PC-3 (cell line): ENCODE measurements at regions of chr17 and their contacts with region 1.

Region 1: GRCh38 chr17:40317880-40318829 is 9.2 kb downstream of the RARA start:
- DNase-seq: peak; percentile 91
- ATAC-seq: peak; percentile 69
- H3K4me3 ChIP-seq: peak overlapping the region; percentile 99
- H3K27ac ChIP-seq: peak overlapping the region; percentile 83
- H3K4me1 ChIP-seq: peaks cover 74% of the 10 kb centered on the region
- H3K27me3 ChIP-seq: no peaks in the 10 kb centered on the region
- CTCF ChIP-seq: no peak

Region 2: DNA sequence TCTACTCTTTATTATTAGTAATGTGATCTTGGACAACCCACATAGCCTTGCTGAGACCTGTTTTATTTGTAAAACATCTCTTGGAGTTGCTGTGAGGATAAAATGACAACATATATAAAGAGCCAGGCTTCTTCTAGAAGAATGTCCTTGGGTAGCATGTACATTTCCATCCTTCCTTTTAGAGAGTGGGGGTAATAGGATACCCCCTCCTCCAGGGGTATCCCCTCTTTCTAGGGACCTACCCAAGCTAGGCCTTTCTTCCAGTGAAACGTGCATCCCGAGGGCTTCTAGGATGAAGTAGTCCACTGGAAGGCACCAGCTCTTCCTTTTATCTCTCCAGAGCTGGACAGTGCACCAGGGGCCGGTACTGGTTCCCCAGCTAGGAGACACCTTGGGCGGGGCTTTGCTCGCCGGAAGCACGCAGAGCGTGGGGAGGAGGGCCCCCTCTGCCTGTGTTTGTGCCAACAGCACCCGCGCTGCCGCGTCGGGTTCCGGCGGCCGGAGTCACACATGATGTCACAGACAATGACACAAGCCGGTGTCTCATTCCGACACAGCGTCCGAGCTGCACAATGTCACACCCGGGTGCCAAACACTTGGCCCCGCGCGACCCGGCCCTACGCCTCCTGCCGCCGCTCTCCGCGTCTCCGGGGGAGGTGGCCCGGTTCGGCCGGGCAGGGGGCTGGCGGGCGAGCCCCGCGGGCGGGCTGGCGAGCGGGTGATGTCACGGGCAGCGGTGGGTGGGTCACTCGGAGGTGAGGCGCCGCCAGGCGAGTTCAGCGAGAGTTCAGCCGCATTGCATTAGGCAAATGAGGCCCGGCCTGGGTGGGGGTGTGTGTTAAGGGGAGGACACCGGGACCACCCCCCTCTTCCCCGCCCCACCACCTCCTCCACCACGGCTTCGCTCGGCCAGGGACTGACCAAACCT is 23.0 kb after region 1 on chr17:
- CTCF ChIA-PET with region 1: no interaction called
- POLR2A ChIA-PET with region 1: interaction called, 3 read pairs
- intact Hi-C with region 1: loop called (anchors 2 kb)
- DNase-seq: peak; percentile 74
- ATAC-seq: peak; percentile 73
- H3K4me3 ChIP-seq: peak overlapping the region; percentile 78
- H3K27ac ChIP-seq: peak overlapping the region; percentile 61
- H3K4me1 ChIP-seq: peaks cover 7% of the 10 kb centered on the region
- H3K27me3 ChIP-seq: no peaks in the 10 kb centered on the region
- CTCF ChIP-seq: no peak